CD8-positive, alpha-beta T cell (primary cell): ENCODE measurements at regions of chr10 and their contacts with region 1.

Region 1: DNA sequence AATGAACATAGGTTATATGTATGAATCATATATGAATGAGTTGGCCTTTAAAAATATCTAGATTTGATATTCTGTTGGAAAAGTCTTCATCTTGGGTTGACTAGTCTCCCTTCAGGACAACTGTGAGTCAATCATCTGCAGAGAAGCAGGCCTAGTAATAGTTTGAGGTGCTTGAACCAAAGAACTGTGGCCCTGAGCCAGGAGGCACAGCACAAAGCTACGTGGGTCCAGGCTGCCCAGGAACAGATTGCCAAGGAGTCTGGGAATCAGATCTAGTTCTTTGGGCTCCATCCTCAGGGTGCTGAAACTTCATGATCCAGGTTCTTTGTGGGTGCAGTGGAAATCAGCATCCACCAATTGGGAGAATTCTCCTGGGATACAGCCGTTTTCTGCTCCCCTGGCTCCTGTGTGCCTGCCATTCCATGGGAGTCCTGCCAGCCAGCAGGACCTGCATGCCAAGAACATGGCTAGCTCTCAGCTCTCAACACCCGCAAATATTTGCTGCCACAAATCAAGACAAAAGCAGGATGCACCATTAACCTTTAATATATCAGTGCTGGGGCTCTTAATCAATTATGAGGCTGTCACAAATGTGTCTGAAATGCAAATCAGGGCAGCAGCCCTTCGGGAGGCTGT is 709.0 kb downstream of the GRID1 start:
- DNase-seq: no peak
- ATAC-seq: no peak
- H3K4me3 ChIP-seq: no peak overlapping the region
- H3K4me3 Mint-ChIP-seq: no peak overlapping the region
- H3K27ac ChIP-seq: no peak overlapping the region
- H3K27ac Mint-ChIP-seq: no peak overlapping the region
- H3K4me1 ChIP-seq: no peaks in the 10 kb centered on the region
- H3K4me1 Mint-ChIP-seq: no peaks in the 10 kb centered on the region
- H3K27me3 ChIP-seq: no peaks in the 10 kb centered on the region
- H3K27me3 Mint-ChIP-seq: no peaks in the 10 kb centered on the region
- CTCF ChIP-seq: no peak

Region 2: DNA sequence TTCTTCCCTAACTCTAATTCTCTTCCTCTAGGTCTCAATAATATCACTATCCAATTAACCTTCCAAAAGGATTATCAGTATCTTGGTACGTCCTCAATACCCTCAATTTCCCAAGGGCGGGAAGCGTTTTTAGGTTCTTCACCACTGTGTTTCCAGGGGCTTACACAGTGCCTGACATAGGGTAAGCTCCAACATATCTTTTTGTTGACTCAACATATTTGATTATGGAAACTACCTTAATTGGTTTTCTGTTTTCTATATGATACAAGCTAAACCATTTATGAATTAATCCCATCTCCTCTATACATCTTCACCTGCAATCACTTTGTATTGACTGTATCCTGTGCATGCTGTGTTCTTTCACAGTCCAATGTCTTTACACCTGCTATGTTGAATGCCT is 278.3 kb before region 1 on chr10:
- CTCF ChIA-PET with region 1: no interaction called
- POLR2A ChIA-PET with region 1: no interaction called
- intact Hi-C with region 1: no loop called
- DNase-seq: no peak
- ATAC-seq: no peak
- H3K4me3 ChIP-seq: no peak overlapping the region
- H3K4me3 Mint-ChIP-seq: no peak overlapping the region
- H3K27ac ChIP-seq: no peak overlapping the region
- H3K27ac Mint-ChIP-seq: no peak overlapping the region
- H3K4me1 ChIP-seq: no peaks in the 10 kb centered on the region
- H3K4me1 Mint-ChIP-seq: no peaks in the 10 kb centered on the region
- H3K27me3 ChIP-seq: no peaks in the 10 kb centered on the region
- H3K27me3 Mint-ChIP-seq: peaks cover 6% of the 10 kb centered on the region
- CTCF ChIP-seq: no peak

Region 3: DNA sequence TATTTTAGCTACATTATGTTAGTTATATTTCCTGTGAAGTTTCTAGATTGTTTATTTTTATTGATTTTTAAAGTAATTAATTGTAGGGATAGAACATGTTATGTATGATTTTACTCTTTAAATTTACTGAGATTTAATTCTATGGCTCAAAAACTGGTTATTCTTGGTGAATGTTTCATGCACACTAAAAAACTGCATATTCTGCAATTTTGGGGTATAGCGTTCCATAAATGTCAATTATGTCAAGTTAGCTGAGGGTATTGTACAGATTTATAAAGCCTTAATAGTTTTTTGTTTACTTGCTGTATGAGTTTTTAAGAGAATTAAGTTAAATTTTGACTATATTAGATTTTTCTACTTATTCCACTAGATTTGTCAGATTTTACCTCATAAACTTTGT is 39.3 kb after region 1 on chr10:
- CTCF ChIA-PET with region 1: no interaction called
- POLR2A ChIA-PET with region 1: no interaction called
- intact Hi-C with region 1: loop called in 1 of 2 experiments (anchors 2 kb)
- DNase-seq: no peak
- ATAC-seq: no peak
- H3K4me3 ChIP-seq: no peak overlapping the region
- H3K4me3 Mint-ChIP-seq: no peak overlapping the region
- H3K27ac ChIP-seq: no peak overlapping the region
- H3K27ac Mint-ChIP-seq: no peak overlapping the region
- H3K4me1 ChIP-seq: no peaks in the 10 kb centered on the region
- H3K4me1 Mint-ChIP-seq: no peaks in the 10 kb centered on the region
- H3K27me3 ChIP-seq: no peaks in the 10 kb centered on the region
- H3K27me3 Mint-ChIP-seq: peaks cover 17% of the 10 kb centered on the region
- CTCF ChIP-seq: no peak

Region 4: DNA sequence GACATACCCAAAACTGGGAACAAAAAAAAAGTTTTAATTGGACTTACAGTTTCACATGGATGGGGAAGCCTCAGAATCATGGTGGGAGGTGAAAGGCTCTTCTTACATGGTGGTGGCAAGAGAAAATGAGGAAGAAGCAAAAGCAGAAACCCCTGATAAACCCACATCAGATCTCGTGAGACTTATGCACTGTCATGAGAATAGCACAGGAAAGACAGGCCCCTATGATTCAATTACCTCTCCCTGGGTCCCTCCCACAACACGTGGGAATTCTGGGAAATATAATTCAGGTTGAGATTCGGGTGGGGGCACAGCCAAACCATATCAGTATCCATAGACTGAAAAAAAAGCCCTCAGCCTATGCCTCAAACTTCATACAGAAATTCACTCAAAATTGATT is 61.8 kb after region 1 on chr10:
- CTCF ChIA-PET with region 1: no interaction called
- POLR2A ChIA-PET with region 1: no interaction called
- intact Hi-C with region 1: no loop called
- DNase-seq: no peak
- ATAC-seq: no peak
- H3K4me3 ChIP-seq: no peak overlapping the region
- H3K4me3 Mint-ChIP-seq: no peak overlapping the region
- H3K27ac ChIP-seq: no peak overlapping the region
- H3K27ac Mint-ChIP-seq: no peak overlapping the region
- H3K4me1 ChIP-seq: no peaks in the 10 kb centered on the region
- H3K4me1 Mint-ChIP-seq: no peaks in the 10 kb centered on the region
- H3K27me3 ChIP-seq: no peaks in the 10 kb centered on the region
- H3K27me3 Mint-ChIP-seq: no peaks in the 10 kb centered on the region
- CTCF ChIP-seq: no peak